ENCODE measurements at regions of chr14 and their contacts with region 1.

Region 1: DNA sequence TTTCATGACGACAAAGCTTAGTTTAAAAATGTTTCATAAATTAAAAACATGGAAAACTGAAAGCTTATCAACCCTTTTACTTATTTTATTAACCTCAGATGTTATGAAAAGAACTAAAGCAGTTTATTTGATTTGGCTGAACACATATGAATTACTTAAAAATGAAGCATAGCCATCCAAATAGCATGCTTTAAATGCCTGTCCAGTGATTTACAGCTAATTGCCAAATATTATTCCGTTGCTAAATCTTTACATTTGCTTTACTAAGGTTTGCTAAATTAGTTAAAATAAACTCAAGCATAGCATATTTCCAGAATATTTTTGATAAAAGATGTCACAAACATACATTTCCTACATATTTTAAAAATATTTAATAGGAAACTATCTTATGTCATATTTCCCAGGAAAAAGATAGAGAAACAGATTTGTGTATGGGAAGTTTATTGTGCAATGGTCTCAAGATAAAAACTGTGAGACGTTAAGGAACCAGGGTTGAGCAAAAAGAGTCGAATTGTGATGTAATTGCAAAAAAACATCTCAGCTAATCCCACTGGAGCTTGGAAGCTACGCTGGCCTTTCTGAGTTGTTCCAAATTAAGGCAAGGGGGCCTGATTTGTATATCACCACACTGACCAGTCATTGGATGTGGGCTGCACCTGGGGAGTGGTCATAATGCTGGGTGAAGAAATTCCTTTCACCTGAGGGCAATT is 25.8 kb downstream of the GPR135 start:
- DNase-seq: no peak
- ATAC-seq: no peak
- H3K4me3 ChIP-seq: no peak overlapping the region
- H3K27ac ChIP-seq: no peak overlapping the region
- H3K4me1 ChIP-seq: peaks cover 13% of the 10 kb centered on the region
- H3K27me3 ChIP-seq: no peaks in the 10 kb centered on the region
- CTCF ChIP-seq: no peak

Region 2: DNA sequence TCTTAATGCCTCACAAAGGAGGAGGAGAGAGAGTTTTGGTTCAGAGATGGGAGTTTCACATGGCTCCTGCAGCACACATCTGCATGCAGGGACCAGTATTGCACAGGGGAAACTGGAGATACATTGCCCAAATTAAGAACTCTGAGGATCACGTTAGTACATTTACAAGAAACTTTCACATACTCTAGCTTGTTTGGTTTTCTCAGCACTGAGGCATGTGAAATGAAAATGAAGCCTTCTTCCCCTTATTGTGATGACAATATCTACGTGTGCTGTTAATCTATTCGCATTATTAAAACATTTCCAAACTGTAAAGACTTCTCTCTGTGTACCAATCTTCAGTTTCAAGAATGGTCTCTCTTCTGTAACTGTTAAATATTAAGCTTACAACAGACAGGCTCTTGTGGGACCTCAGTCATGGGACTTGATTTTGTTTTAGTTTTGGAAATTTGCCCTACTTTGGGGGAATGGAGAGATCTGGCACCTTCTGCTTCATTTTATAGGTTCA is 126.2 kb before region 1 on chr14:
- CTCF ChIA-PET with region 1: interaction called, 5 read pairs
- POLR2A ChIA-PET with region 1: interaction called, 3 read pairs
- intact Hi-C with region 1: loop called (anchors 1 kb)
- DNase-seq: no peak
- ATAC-seq: no peak
- H3K4me3 ChIP-seq: no peak overlapping the region
- H3K27ac ChIP-seq: no peak overlapping the region
- H3K4me1 ChIP-seq: peaks cover 14% of the 10 kb centered on the region
- H3K27me3 ChIP-seq: no peaks in the 10 kb centered on the region
- CTCF ChIP-seq: no peak